ENCODE measurements at regions of chr7 and their contacts with region 1.

Region 1: GRCh38 chr7:80134536-80135320 is at the start of gene GNAI1:
- DNase-seq: peak in 1 of 2 donors; percentile 34
- ATAC-seq: peak; percentile 68 to 80
- H3K4me3 ChIP-seq: peak within 1 kb of the TSS; percentile 80 to 90 (median 82)
- H3K27ac ChIP-seq: peak within 1 kb of the TSS; percentile 78 to 84 (median 81)
- H3K4me1 ChIP-seq: peaks cover 10 to 19% of the 10 kb centered on the region in 2 donors
- H3K27me3 ChIP-seq: no peaks in the 10 kb centered on the region
- CTCF ChIP-seq: peak in 3 of 5 experiments; percentile 15 to 38 (median 24)
- POLR2A ChIP-seq: peak; percentile 9 to 68
- total RNA-seq, gene GNAI1: 6.5 to 13.0 (median 8.3) TPM

Region 2: DNA sequence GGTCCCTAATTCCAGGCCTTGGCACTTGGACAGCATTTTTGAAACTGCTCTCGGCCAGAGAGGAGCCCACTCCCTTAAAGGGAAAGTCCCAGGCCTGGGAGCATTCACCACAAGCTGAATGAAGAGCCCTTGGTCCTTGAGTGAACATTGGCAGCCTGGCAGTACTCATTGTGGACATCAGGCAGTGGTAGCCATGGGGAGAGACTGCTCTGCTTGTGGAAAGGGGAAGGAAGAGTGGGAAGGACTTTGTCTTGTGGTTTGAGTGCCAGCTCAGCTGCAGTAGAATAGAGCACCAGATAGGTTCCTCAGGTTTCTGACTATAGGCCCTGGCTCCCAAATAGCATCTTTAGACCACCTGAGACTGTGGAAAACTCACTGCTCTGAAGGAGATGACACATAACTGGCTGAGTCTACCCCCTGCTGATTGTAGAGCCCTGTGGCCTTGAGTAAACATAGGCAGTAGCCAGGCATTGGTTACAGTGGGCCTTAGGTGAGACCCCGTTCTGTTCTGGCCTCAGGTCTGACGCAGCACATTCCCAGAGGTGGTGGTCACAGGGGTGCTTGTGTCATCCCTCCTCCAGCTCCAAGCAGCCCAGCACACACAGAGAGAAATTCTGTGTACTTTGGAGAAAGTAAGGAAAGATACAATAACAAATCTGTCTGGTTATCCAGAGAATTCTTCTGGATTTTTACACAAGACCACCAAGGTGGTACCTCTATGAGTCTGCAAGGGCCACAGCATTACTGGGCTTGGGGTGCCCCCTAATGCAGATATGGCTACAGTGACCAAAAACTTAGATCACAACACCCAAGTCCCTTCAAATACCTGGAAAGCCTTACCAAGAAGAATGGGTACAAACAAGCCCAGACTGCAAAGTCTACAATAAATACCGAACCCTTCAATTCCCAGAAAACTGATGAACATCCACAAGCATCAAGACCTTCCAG is 153.7 kb after region 1 on chr7:
- in situ Hi-C with region 1: no loop called
- intact Hi-C with region 1: loop called (anchors 10 kb)
- DNase-seq: no peak
- ATAC-seq: no peak
- H3K4me3 ChIP-seq: no peak overlapping the region
- H3K27ac ChIP-seq: no peak overlapping the region
- H3K4me1 ChIP-seq: no peaks in the 10 kb centered on the region
- H3K27me3 ChIP-seq: no peaks in the 10 kb centered on the region
- CTCF ChIP-seq: no peak
- POLR2A ChIP-seq: no peak